ENCODE measurements at regions of chr14 and their contacts with region 1.

Region 1: GRCh38 chr14:59483900-59484638 is at the starts of genes JKAMP and L3HYPDH:
- DNase-seq: peak; percentile 91 to 95 (median 92)
- H3K4me3 ChIP-seq: peak within 1 kb of the TSS; percentile 80 to 95 (median 83)
- H3K4me3 Mint-ChIP-seq: peak within 1 kb of the TSS; percentile 95 to 98
- H3K27ac ChIP-seq: peak within 1 kb of the TSS; percentile 72 to 91
- H3K27ac Mint-ChIP-seq: peak within 1 kb of the TSS; percentile 84 to 98 (median 95)
- H3K4me1 ChIP-seq: peaks cover 36 to 38% of the 10 kb centered on the region in 2 donors
- H3K4me1 Mint-ChIP-seq: peaks cover 58% of the 10 kb centered on the region
- H3K27me3 ChIP-seq: no peaks in the 10 kb centered on the region
- H3K27me3 Mint-ChIP-seq: no peaks in the 10 kb centered on the region
- CTCF ChIP-seq: peak; percentile 87
- polyA plus RNA-seq, gene JKAMP: 49.7 to 134 (median 99.4) TPM
- polyA plus RNA-seq, gene L3HYPDH: 3.9 to 30.7 (median 5.3) TPM

Region 2: DNA sequence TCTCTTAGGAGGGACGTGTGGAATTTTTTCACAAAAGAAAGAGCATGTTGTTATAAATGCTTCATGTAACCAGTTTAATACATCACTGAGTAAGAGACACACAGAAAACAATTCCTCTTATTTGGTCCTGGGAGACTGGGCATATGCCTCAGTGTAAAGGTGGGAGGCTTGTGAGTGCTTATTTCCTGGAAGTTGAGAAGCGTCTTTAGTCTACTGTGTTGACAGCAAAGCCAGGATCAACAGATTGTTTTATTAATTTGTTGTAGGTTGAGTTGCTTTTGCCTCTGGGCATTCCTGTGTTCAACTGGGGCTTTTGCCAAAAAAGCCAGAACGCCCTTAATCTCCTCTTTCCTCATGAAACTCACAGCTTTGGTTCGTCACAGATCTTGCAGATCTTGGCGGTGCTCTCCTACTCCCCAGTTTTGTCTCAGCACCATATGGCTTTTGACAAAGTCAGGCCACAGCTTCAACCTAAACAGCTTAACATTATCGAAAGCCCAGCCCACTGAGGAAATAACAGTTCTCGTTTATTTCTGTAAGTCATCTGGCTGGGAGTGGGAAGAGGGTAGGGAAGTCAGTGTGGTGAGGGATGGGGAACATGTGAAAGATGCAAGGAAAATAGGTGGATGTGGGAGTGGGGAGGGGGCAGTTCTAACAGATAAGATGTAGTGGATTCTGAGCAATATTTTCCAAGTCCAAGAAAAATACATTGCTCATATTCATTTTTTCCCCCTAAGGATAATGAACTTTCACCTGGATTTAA is 619.1 kb before region 1 on chr14:
- intact Hi-C with region 1: no loop called
- DNase-seq: no peak
- H3K4me3 ChIP-seq: no peak overlapping the region
- H3K4me3 Mint-ChIP-seq: no peak overlapping the region
- H3K27ac ChIP-seq: no peak overlapping the region
- H3K27ac Mint-ChIP-seq: no peak overlapping the region
- H3K4me1 ChIP-seq: no peaks in the 10 kb centered on the region
- H3K4me1 Mint-ChIP-seq: peaks cover 4% of the 10 kb centered on the region
- H3K27me3 ChIP-seq: no peaks in the 10 kb centered on the region
- H3K27me3 Mint-ChIP-seq: no peaks in the 10 kb centered on the region
- CTCF ChIP-seq: no peak

Region 3: DNA sequence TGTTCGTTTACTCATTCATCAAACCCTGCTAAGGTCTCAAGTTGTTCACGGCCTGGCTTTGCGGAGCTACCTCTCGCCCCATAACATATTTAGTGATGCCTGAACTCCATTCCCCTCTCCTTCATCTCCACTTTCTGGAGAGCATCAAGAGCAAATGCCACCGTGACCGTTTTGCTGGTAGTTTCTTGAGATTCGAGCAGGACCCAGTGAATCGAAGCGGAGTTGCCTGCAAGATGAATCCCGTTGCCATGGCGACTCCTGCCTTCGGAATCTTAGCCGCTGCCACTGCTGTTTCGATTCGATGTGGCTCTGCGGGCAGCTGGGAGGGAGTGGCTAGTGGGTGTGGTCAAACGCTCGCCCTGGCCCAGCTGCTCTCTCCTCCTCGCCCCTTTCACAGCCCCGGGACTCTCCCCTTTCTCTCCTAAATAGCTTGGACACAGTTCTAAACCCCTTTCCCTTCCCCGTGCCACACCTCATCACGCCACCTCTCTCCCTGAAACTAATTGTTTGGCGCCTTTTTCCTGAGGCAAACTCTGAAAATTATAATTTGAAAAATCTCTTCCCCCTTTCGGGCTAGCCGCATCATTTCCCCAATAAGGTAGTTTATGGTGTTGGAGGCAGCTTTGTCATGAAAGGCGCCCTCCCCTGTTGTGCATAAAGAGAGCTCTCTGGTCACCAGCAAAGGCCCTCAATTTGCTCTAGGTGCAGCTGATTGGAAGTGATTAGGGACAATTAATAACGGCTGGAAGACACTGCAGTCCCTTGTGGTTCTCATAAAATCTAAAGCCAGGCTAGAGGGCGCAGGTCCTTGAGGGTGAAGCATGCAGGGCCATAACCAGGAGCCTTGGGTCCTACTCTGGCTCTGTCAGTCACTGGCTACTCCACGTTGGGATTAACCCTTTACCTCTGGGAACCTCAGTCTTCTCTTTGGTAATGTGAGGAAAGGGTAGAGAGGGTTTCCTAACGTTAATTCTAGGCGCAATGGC is 294.0 kb before region 1 on chr14:
- intact Hi-C with region 1: loop called in 1 of 2 experiments (anchors 5 kb)
- DNase-seq: peak; percentile 77 to 81 (median 78)
- H3K4me3 ChIP-seq: peak overlapping the region; percentile 87 to 95 (median 88)
- H3K4me3 Mint-ChIP-seq: peak overlapping the region; percentile 97 to 98
- H3K27ac ChIP-seq: peak overlapping the region in 1 of 2 donors; percentile 80
- H3K27ac Mint-ChIP-seq: peak overlapping the region; percentile 27 to 96 (median 89)
- H3K4me1 ChIP-seq: peaks cover 21 to 26% of the 10 kb centered on the region in 2 donors
- H3K4me1 Mint-ChIP-seq: peaks cover 21% of the 10 kb centered on the region
- H3K27me3 ChIP-seq: peaks cover 15 to 23% of the 10 kb centered on the region in 2 donors
- H3K27me3 Mint-ChIP-seq: peaks cover 15 to 22% (median 21%) of the 10 kb centered on the region in 3 donors
- CTCF ChIP-seq: no peak

Region 4: DNA sequence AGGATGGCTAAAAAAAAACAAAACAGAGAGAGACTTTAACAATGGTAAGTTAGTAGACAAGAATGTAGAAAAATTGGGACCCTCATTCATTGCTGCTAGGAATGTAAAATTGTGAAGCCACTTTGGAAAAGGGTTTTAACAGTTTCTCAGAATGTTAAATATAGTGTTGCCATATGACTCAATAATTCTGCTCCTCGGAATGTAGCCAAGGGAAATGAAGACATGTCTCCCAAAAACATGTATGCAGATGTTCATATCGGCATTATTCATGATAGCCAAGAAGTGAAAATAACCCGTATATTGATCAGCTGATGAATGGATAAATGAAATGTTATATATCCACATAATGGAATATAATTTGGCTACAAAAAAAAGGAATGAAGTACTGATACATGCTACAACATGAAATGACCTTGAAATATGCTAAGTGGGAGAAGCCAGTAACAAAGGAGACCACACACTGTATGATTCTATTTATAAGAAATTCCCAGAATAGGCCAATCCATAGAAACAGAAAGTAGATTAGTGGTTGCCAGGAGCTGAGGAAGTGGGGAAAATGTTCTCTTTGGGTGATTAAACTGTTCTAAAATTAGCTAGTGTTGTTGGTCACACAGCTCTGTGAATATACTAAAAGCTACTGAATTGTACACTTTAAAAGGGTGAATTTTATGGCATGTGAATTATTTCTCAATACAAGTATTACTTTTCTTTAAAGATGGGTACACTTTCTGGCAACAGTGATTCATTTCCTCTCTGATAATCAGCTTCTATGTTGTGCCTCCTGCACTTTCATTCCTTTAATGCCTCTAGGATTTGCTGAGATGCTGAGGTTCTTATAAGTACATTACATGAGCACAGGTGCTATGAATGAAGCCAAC is 163.1 kb before region 1 on chr14:
- intact Hi-C with region 1: no loop called
- DNase-seq: peak in 2 of 3 donors; percentile 23 to 25
- H3K4me3 ChIP-seq: peak overlapping the region in 1 of 3 experiments; percentile 28
- H3K4me3 Mint-ChIP-seq: peak overlapping the region in 1 of 2 donors; percentile 60
- H3K27ac ChIP-seq: peak overlapping the region in 1 of 2 donors; percentile 53
- H3K27ac Mint-ChIP-seq: peak overlapping the region in 3 of 7 donors; percentile 28 to 46 (median 32)
- H3K4me1 ChIP-seq: peaks cover 28 to 40% of the 10 kb centered on the region in 2 donors
- H3K4me1 Mint-ChIP-seq: peaks cover 41% of the 10 kb centered on the region
- H3K27me3 ChIP-seq: no peaks in the 10 kb centered on the region
- H3K27me3 Mint-ChIP-seq: no peaks in the 10 kb centered on the region
- CTCF ChIP-seq: no peak

Region 5: DNA sequence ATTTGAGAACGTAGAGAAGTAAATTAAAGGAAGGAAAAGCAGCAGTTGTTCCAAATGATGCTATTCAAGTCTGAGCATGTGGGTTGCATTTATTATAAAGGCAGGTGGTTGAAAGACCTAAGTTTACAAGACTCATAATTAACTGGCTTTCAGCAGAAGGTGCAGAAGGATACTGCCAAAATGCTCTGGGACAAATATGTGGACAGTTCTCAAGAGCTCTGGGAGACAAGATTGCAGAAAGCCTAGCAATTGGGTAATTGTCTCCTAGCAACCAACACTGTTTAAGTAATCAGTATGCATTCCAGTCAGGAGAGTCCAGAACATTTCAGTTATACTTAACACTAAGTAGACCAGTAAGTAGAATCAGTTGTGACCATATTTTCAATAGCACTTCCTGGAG is 150.4 kb before region 1 on chr14:
- intact Hi-C with region 1: no loop called
- DNase-seq: peak in 2 of 3 donors; percentile 29 to 35
- H3K4me3 ChIP-seq: peak overlapping the region in 1 of 3 experiments; percentile 7
- H3K4me3 Mint-ChIP-seq: no peak overlapping the region
- H3K27ac ChIP-seq: peak overlapping the region in 1 of 2 donors; percentile 29
- H3K27ac Mint-ChIP-seq: peak overlapping the region in 4 of 7 donors; percentile 3 to 60 (median 28)
- H3K4me1 ChIP-seq: peaks cover 34 to 35% of the 10 kb centered on the region in 2 donors
- H3K4me1 Mint-ChIP-seq: peaks cover 51% of the 10 kb centered on the region
- H3K27me3 ChIP-seq: no peaks in the 10 kb centered on the region
- H3K27me3 Mint-ChIP-seq: no peaks in the 10 kb centered on the region
- CTCF ChIP-seq: no peak

Region 6: DNA sequence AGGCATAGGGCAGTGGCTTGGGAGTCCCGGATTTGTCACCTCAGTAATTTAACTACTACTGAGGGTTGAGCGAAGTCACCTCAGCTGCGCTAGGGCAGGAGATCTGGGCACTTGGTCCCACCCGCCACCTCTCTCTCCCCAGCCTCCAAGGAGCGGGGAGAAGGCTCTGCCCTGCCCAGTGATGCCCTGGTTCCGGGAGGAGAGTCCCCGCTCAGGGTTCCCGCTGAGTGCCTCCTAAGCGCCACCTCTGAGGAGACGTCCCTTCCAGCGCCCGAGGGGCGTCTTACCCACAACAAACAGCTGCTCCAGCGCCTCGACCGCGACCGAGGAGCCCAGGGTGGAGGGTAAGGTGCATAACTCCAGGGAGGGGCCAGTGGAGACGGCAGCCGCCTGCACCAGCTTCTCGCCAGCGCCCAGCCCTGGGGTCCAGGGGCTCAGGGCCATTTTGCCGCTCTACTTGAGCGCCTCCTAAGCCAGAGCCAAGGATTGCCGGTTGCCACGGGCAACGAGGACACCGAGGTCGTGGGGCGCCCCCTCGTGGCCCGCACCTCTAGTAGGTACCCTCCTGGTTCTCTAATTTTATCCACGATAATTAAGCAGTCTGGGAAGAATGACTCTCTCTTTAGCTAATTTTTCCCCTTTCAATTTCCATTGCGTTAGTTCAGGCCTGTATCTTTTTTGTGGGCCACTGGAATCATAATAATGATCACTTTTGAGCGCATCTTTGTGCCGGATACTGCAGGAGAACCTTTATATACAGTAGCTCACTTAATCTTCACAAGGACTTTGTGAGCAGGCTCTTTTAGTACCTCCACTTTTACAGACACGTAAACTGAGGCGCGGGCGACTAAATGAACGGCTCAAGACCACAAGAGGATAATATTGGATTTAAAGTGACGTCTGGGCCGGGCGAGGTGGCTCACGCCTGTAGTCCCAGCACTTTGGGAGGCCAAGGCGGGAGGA is 92.5 kb after region 1 on chr14 and contains the start of gene CCDC175:
- intact Hi-C with region 1: loop called (anchors 5 to 10 kb)
- DNase-seq: peak; percentile 83 to 90 (median 88)
- H3K4me3 ChIP-seq: peak within 1 kb of the TSS; percentile 23 to 76 (median 55)
- H3K4me3 Mint-ChIP-seq: peak within 1 kb of the TSS; percentile 77 to 92
- H3K27ac ChIP-seq: no peak within 1 kb of the TSS
- H3K27ac Mint-ChIP-seq: peak within 1 kb of the TSS in 2 of 7 donors; percentile 30 to 36
- H3K4me1 ChIP-seq: peaks cover 11 to 12% of the 10 kb centered on the region in 2 donors
- H3K4me1 Mint-ChIP-seq: peaks cover 10% of the 10 kb centered on the region
- H3K27me3 ChIP-seq: peaks cover 0 to 3% of the 10 kb centered on the region in 2 donors
- H3K27me3 Mint-ChIP-seq: peaks cover 4 to 14% (median 9%) of the 10 kb centered on the region in 3 donors
- CTCF ChIP-seq: peak; percentile 97
- polyA plus RNA-seq, gene CCDC175: not detected

Region 7: GRCh38 chr14:60248697-60249318 is 764.7 kb after region 1 on chr14 and contains the start of gene PPM1A:
- intact Hi-C with region 1: loop called in 1 of 2 experiments (anchors 10 kb)
- DNase-seq: peak; percentile 96 to 97 (median 96)
- H3K4me3 ChIP-seq: peak within 1 kb of the TSS; percentile 92 to 98 (median 93)
- H3K4me3 Mint-ChIP-seq: peak within 1 kb of the TSS; percentile 87 to 95
- H3K27ac ChIP-seq: peak within 1 kb of the TSS; percentile 98 to 99
- H3K27ac Mint-ChIP-seq: peak within 1 kb of the TSS; percentile 97 to 100 (median 99)
- H3K4me1 ChIP-seq: peaks cover 35 to 41% of the 10 kb centered on the region in 2 donors
- H3K4me1 Mint-ChIP-seq: peaks cover 51% of the 10 kb centered on the region
- H3K27me3 ChIP-seq: no peaks in the 10 kb centered on the region
- H3K27me3 Mint-ChIP-seq: peaks cover 0 to 3% (median 1%) of the 10 kb centered on the region in 3 donors
- CTCF ChIP-seq: no peak
- polyA plus RNA-seq, gene PPM1A: 18.4 to 34.1 (median 21.5) TPM